Naive thymus-derived CD4-positive, alpha-beta T cell (primary cell): ENCODE measurements at regions of chr4 and their contacts with region 1.

Region 1: DNA sequence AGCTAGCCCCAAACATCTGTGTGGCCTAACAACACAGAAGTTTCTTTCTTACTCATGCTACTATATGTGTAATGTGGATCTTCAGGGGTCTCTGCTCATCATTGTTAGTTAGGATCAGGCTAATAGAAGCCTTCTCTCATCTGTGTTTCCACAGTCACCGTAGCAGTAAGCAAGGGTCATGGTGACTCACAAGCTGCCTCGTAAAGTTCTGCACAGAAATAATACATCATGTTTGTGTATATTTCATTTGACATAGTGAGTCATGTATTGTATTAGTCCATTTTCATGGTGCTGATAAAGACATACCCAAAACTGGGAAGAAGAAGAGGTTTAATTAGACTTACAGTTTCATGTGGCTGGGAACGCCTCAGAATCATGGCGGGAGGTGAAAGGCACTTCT is 38.7 kb downstream of the SLC4A4 start:
- DNase-seq: no peak
- ATAC-seq: no peak
- H3K4me3 ChIP-seq: no peak overlapping the region
- H3K4me3 Mint-ChIP-seq: no peak overlapping the region
- H3K27ac ChIP-seq: no peak overlapping the region
- H3K27ac Mint-ChIP-seq: no peak overlapping the region
- H3K4me1 ChIP-seq: no peaks in the 10 kb centered on the region
- H3K4me1 Mint-ChIP-seq: no peaks in the 10 kb centered on the region
- H3K27me3 ChIP-seq: no peaks in the 10 kb centered on the region
- H3K27me3 Mint-ChIP-seq: no peaks in the 10 kb centered on the region

Region 2: DNA sequence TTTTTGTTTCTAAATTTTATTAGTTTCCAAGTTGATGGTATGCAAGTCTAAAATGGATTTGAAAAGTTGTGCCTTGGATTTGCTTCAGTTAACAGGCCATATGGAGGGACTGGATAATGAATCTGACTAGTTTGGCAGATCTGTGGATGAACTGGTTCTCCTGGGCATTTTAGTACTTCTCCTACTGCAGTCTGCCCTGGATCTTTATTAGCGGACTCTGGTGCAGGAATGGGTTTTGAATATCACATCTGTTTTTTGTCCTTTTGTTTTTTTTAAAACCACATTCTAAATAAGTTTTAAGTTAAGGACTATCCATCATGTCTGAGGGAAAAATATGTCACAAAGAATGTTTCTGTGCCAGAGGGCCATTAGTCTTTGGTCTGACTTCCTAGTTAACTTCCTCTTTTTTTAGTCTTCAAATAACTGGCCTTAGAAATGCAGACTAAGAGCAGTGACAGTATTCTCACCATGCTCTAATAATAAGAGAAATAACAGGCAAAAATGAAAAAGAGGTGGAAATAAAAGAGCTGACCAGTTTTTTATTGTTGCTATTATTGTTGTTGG is 398.0 kb before region 1 on chr4:
- CTCF ChIA-PET with region 1: no interaction called
- POLR2A ChIA-PET with region 1: no interaction called
- intact Hi-C with region 1: no loop called
- DNase-seq: no peak
- ATAC-seq: no peak
- H3K4me3 ChIP-seq: no peak overlapping the region
- H3K4me3 Mint-ChIP-seq: no peak overlapping the region
- H3K27ac ChIP-seq: no peak overlapping the region
- H3K27ac Mint-ChIP-seq: peak overlapping the region in 1 of 9 donors; percentile 17
- H3K4me1 ChIP-seq: no peaks in the 10 kb centered on the region
- H3K4me1 Mint-ChIP-seq: peaks cover 0 to 2% (median 0%) of the 10 kb centered on the region in 7 donors
- H3K27me3 ChIP-seq: no peaks in the 10 kb centered on the region
- H3K27me3 Mint-ChIP-seq: no peaks in the 10 kb centered on the region

Region 3: DNA sequence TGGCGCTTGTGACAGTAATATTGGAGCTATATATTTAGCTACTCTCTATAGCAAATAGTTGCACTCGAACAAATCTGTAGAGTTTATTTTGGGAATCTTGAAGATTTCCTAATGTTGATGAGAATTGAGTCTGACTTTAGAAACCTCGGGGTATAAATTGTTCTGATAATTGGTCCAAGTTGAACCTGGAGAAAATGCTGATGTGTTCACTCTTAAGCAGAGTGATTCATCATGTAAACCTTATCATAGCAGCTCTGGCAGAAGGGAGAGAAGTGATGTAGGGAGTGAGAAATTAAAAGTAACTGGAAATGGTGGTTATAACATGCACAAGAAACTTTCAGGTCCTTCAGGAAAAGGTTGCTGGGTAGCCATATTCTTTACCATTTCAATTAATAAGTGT is 55.1 kb before region 1 on chr4:
- CTCF ChIA-PET with region 1: no interaction called
- POLR2A ChIA-PET with region 1: no interaction called
- intact Hi-C with region 1: loop called in 1 of 2 experiments (anchors 10 kb)
- DNase-seq: no peak
- ATAC-seq: no peak
- H3K4me3 ChIP-seq: no peak overlapping the region
- H3K4me3 Mint-ChIP-seq: no peak overlapping the region
- H3K27ac ChIP-seq: no peak overlapping the region
- H3K27ac Mint-ChIP-seq: no peak overlapping the region
- H3K4me1 ChIP-seq: no peaks in the 10 kb centered on the region
- H3K4me1 Mint-ChIP-seq: no peaks in the 10 kb centered on the region
- H3K27me3 ChIP-seq: no peaks in the 10 kb centered on the region
- H3K27me3 Mint-ChIP-seq: peaks cover 6 to 19% (median 8%) of the 10 kb centered on the region in 5 donors